GM13976 (cell line): ENCODE measurements at regions of chr17 and their contacts with region 1.

Region 1: DNA sequence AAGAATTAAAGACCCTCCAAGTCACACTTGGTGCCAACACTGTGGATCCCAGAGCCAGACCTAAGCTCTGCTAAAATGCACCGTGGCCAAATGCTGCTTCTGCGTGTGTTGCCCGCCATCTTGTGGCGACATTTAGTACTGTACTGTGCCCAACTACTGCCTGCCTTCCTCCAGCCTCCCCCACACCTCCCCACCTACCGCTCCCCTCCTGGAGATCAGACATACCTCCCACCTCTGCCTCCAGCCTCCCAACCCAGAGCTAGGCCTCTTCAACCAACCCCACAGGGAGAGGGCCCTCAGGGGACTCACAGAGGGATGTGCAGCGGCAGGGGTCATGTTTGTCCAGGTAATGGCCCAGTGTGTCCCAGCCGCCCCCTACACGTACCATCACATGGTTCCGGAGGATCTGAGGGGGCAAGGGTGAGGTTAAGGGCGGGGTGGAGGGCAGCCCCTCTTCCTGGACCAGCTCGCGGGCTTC is 5.5 kb downstream of the GAS2L2 start:
- DNase-seq: peak; percentile 90
- CTCF ChIP-seq: peak; percentile 88

Region 2: DNA sequence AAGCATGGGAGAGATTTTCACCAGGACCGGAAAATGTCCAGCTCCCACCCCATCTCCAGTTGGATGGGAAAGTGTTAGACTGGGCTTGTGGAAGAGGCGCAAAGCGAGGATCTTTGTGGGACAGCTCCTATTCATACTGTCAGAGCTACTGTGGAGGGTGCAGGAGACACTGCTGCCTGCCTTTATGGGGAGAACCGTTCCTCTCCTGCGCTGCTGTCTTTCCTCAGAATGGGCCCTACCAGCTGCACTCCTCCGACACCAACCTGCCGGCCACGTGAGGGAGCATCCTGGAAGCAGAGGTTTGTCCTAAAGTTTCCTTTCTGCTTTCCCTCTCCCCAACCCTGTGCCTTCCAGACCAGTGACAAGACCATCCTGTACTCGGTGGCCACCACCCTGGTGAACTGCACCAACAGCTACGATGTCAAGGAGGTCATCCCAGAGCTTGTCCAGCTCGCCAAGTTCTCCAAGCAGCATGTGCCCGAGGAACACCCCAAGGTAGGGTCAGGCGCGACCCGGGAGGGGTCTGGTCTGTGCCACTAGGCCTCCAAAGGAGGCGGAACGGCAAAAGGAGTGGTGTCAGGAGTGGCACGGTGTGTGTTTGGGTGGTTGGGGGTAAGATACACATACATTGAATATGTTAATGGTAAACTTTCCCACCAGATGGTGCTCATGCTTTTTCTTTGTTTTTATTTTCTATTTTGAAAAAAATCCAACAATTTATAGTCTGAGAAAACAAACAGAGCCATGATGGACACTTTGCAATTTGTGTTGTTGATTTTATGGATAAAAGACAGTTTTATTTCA is 576.4 kb before region 1 on chr17:
- in situ Hi-C with region 1: loop called (anchors 25 kb)
- DNase-seq: peak; percentile 63
- CTCF ChIP-seq: no peak

Region 3: GRCh38 chr17:35312790-35313711 is 434.5 kb before region 1 on chr17:
- in situ Hi-C with region 1: loop called (anchors 25 kb)
- DNase-seq: peak; percentile 66
- CTCF ChIP-seq: peak; percentile 71

Region 4: GRCh38 chr17:35621768-35622167 is 125.8 kb before region 1 on chr17:
- in situ Hi-C with region 1: loop called (anchors 5 kb)
- DNase-seq: no peak
- CTCF ChIP-seq: no peak

Region 5: DNA sequence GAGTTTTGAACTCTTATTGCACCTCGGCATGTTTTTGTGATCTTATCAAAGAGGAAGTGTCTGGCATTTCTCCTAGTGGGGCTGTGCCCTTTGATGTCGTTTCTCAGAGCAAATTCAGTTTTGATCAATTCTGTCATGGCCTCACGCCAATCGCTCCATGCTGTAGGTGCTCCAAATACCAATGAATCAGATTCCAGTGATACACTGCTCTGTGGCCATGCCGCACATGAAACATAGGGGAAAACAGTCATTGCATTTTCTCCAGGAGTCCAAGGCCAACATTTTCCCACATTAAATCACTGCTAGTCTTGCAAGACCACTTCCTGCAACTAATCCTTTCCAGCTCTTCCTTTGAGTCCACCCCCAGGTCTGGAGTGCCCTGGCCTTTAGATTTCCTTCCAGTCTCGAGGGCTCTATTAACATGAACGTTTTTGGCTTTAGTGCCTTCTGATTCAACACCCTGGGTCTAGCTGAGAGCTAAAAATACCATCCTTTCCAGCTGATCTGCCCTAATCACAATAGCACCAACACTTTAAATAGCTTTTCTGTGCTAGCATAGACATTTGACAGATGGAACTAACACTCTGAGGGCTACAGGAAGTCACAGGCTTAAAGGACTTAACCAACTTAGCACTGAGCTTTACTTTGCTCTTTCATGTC is 34.4 kb before region 1 on chr17:
- in situ Hi-C with region 1: no loop called
- DNase-seq: no peak
- CTCF ChIP-seq: no peak

Region 6: DNA sequence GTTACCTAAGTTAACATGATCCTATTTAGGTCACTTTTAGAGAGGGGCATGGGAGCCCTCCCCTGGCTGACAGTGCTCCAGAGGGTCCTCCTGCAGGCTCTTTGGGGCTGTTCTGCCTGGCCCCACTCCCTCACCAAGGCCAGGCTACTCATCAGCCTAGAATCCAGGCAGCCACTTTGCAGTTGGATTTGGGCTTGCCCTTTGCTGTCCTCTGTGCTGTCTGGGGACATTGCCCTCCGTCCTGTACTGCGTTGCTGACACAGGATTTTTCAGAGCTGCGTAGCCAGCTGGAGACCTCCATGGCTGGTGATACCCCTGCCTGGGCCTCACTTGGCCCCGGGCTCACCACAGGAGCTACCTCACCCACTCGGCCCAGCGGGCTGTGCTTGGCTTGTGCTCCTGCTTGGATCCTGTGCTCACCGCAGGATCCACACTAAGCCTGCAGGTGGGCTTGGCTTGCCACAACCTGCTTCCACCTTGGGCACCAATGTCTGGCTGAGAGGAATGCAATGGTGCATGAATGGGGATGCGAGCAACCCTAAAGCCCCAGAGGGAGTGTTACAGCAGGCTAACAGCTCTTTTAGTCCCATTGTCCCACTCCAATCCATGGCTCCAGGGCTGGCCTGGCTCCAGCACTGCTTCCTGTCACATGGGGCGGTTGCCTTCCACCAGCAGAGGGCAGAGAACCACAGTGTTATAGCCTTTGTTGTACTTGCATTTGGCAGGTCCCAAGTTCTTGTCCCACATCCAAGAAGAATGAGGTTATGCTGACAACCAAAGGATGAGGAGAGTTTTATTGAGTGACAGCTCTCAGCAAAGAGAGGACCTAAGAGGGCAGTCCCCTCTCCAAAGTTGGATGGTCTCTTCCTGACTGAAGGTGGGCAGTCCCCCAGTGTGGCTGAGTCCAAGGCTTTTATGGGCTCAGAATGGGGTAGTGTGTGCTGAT is 377.6 kb after region 1 on chr17:
- in situ Hi-C with region 1: no loop called
- DNase-seq: no peak
- CTCF ChIP-seq: no peak